Mammary epithelial cell (primary cell): ENCODE measurements at regions of chr20 and their contacts with region 1.

Region 1: DNA sequence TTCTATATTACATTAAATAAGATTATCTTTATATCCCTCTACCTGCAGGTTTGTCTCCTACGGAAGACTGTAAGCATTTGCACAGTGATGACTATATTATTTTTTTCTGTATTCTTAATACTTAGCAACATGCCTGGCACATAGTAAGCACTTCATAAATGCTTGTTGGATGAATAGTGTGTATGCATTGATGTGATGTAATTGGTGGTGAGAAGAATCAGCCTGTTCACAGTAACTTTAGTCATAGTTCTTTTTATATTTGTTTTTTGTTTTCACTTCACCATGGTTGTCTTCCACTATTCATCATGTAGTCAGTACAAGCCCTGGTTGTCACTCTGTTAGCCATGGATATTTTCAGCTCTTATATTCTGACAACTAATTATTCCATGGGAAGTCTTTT is 184.0 kb upstream of the FLRT3 start:
- DNase-seq: peak; percentile 93
- H3K4me3 ChIP-seq: no peak overlapping the region
- H3K27ac ChIP-seq: peak overlapping the region; percentile 99
- H3K4me1 ChIP-seq: peaks cover 36% of the 10 kb centered on the region
- H3K27me3 ChIP-seq: no peaks in the 10 kb centered on the region
- CTCF ChIP-seq: no peak

Region 2: GRCh38 chr20:14219801-14220461 is 301.5 kb before region 1 on chr20:
- CTCF ChIA-PET with region 1: no interaction called
- dilution Hi-C with region 1: no loop called
- in situ Hi-C with region 1: no loop called
- intact Hi-C with region 1: no loop called
- DNase-seq: peak; percentile 61
- H3K4me3 ChIP-seq: no peak overlapping the region
- H3K27ac ChIP-seq: no peak overlapping the region
- H3K4me1 ChIP-seq: peaks cover 11% of the 10 kb centered on the region
- H3K27me3 ChIP-seq: no peaks in the 10 kb centered on the region
- CTCF ChIP-seq: no peak

Region 3: GRCh38 chr20:14288341-14289330 is 232.8 kb before region 1 on chr20:
- CTCF ChIA-PET with region 1: no interaction called
- dilution Hi-C with region 1: no loop called
- in situ Hi-C with region 1: no loop called
- intact Hi-C with region 1: loop called (anchors 5 kb)
- DNase-seq: peak; percentile 99
- H3K4me3 ChIP-seq: peak overlapping the region in 1 of 3 experiments; percentile 1
- H3K27ac ChIP-seq: peak overlapping the region; percentile 100
- H3K4me1 ChIP-seq: peaks cover 57% of the 10 kb centered on the region
- H3K27me3 ChIP-seq: no peaks in the 10 kb centered on the region
- CTCF ChIP-seq: no peak

Region 4: DNA sequence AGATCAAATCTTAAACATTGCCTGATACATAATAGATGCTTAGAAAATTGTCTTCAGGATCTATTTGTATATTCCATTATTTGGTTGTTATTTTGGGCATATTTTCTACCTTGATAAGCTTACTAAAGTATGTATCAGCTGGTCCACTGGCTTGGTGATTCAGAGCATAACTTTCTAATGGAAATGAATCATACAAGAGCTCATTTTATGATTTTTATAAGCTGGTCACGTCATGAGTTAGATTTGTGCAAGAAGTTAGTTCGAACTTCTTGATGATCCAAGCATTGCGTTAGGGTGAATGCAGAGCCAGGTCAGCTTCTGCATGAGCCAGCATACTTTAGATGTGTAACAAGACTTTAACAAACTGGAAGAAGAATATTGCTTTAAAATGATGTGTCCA is 39.6 kb before region 1 on chr20:
- CTCF ChIA-PET with region 1: no interaction called
- dilution Hi-C with region 1: no loop called
- in situ Hi-C with region 1: no loop called
- intact Hi-C with region 1: loop called (anchors 1 kb)
- DNase-seq: peak; percentile 77
- H3K4me3 ChIP-seq: no peak overlapping the region
- H3K27ac ChIP-seq: no peak overlapping the region
- H3K4me1 ChIP-seq: no peaks in the 10 kb centered on the region
- H3K27me3 ChIP-seq: no peaks in the 10 kb centered on the region
- CTCF ChIP-seq: no peak

Region 5: DNA sequence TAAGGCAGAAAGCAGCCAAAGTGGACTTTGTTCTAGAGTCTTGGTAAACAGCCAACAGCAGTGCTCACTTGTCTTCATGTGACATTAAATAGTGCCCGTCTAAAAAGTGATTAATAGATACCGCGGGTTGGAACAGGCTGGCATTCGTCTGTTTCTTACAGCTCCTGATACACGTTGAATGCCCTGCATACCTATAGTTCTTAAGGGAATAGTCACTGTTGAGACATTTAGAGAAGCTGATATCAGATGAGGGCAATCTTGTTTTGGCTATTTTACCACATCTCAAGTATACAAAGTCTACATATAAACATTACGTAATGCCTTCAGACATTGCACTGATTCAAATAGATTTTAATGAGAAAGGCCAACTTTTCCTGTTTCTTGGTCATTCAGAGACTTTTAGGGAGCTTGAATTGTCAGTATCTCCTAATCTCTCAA is 190.9 kb after region 1 on chr20:
- CTCF ChIA-PET with region 1: no interaction called
- dilution Hi-C with region 1: no loop called
- in situ Hi-C with region 1: no loop called
- intact Hi-C with region 1: loop called (anchors 1 kb)
- DNase-seq: peak; percentile 82
- H3K4me3 ChIP-seq: no peak overlapping the region
- H3K27ac ChIP-seq: peak overlapping the region; percentile 64
- H3K4me1 ChIP-seq: peaks cover 25% of the 10 kb centered on the region
- H3K27me3 ChIP-seq: no peaks in the 10 kb centered on the region
- CTCF ChIP-seq: peak in 1 of 2 donors; percentile 1

Region 6: GRCh38 chr20:14951707-14952418 is 430.4 kb after region 1 on chr20:
- CTCF ChIA-PET with region 1: no interaction called
- dilution Hi-C with region 1: no loop called
- in situ Hi-C with region 1: no loop called
- intact Hi-C with region 1: loop called (anchors 10 kb)
- DNase-seq: peak; percentile 46
- H3K4me3 ChIP-seq: no peak overlapping the region
- H3K27ac ChIP-seq: peak overlapping the region; percentile 25
- H3K4me1 ChIP-seq: peaks cover 12% of the 10 kb centered on the region
- H3K27me3 ChIP-seq: no peaks in the 10 kb centered on the region
- CTCF ChIP-seq: no peak